CD14-positive monocyte (primary cell): ENCODE measurements at regions of chr15 and their contacts with region 1.

Region 1: DNA sequence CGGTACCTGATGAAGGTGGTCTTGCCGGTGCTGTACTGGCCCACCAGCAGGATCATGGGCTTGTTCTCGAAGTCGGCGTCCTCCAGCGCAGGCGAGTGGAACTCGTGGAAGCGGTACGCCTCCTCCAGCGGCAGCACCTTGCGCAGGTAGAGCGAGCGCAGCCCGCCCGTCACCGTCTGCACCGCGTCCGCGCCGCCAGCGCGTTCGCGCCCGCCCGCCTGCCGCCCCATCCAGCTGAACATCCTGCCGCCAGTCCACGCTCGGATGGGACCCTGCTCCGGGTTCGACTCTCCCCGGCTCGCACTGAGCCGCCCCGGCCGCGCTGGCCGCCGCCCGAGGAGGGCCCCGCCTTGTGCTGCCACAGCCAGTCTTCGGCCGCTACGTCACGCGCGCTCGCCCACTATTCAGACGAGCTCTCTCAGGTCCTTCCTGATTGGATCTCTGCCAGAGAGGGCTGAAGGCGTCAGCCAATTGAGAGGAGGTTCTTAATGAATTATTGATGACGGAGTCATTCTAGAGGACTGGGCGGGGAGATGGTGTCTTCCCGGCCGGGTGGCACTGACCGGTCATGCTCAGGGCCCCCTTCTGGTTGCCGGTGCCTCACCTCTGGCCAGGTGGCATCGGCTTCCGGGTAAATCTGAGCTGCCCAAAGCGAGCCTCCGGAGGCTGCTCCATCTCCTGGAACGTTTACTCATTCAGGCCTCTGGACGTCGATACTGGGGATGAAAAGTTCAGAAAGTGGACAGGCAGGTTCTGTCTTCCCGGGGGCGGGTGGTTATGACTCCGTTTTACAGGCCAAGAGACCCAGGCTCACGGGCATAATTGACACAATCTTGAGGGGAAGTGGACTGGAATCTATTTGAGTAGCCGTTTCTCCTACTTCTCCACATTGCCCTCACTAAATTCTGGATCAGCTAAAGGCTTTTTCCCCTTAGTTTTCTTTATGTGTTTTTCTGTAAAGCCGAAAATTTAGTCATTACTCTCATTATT is at the start of gene EHD4:
- DNase-seq: peak; percentile 99 to 100 (median 99)
- H3K4me3 ChIP-seq: peak within 1 kb of the TSS; percentile 90 to 93 (median 92)
- H3K4me3 Mint-ChIP-seq: peak within 1 kb of the TSS; percentile 91 to 93
- H3K27ac ChIP-seq: peak within 1 kb of the TSS; percentile 58 to 93
- H3K27ac Mint-ChIP-seq: peak within 1 kb of the TSS; percentile 96 to 98 (median 97)
- H3K4me1 ChIP-seq: peaks cover 48 to 51% of the 10 kb centered on the region in 2 donors
- H3K4me1 Mint-ChIP-seq: peaks cover 54% of the 10 kb centered on the region
- H3K27me3 ChIP-seq: no peaks in the 10 kb centered on the region
- H3K27me3 Mint-ChIP-seq: peaks cover 0 to 2% (median 1%) of the 10 kb centered on the region in 3 donors
- CTCF ChIP-seq: peak; percentile 51
- polyA plus RNA-seq, gene EHD4: 12.8 to 16.0 (median 14.2) TPM

Region 2: DNA sequence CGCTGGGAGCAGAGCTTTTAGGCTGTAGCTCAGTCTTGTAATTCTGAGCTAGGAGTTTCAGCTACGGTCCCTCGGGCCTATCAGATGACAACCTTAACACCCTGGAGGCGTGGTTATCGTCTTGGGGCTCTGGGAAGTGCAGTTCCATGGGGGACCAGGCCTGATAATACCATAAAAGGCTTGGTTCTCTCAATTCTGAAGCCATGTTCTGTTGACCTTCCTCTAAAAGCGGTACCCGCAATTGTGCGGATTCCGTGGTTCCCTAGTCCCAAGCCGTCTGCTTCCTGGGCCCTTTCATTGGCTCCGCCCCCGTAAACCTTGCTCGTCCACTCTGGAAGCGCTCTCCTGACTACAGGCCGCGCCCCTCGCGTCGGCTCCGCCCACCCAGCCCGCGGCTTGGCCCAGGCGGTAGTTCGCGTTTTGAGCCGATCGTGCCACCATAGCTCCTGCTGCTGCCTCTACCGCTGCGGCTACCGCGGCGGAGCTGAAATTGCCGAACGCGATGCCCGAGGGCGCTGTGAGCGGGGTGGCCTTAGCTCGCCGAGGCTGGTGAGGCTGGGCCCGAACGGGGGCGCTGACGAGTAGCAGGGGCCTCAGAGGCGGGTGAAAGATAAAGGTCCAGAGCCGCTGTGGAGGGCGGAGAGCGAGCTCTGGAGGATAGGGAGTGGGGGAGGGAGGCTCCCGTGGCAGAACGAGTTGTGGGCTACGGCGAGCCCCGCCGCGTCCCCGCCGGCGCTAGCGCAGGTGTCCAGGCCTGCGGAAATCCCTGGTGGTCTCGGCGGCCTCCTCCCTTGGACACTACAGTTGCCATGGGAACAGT is 198.3 kb before region 1 on chr15 and contains the start of gene MAPKBP1:
- intact Hi-C with region 1: loop called in 1 of 2 experiments (anchors 5 kb)
- DNase-seq: peak; percentile 98 to 100 (median 98)
- H3K4me3 ChIP-seq: peak within 1 kb of the TSS; percentile 72 to 89 (median 83)
- H3K4me3 Mint-ChIP-seq: peak within 1 kb of the TSS; percentile 83 to 91
- H3K27ac ChIP-seq: peak within 1 kb of the TSS; percentile 76 to 81
- H3K27ac Mint-ChIP-seq: peak within 1 kb of the TSS; percentile 81 to 96 (median 91)
- H3K4me1 ChIP-seq: peaks cover 28 to 32% of the 10 kb centered on the region in 2 donors
- H3K4me1 Mint-ChIP-seq: peaks cover 36% of the 10 kb centered on the region
- H3K27me3 ChIP-seq: no peaks in the 10 kb centered on the region
- H3K27me3 Mint-ChIP-seq: no peaks in the 10 kb centered on the region
- CTCF ChIP-seq: peak; percentile 57
- polyA plus RNA-seq, gene MAPKBP1: 0.76 to 8.6 (median 1.1) TPM

Region 3: DNA sequence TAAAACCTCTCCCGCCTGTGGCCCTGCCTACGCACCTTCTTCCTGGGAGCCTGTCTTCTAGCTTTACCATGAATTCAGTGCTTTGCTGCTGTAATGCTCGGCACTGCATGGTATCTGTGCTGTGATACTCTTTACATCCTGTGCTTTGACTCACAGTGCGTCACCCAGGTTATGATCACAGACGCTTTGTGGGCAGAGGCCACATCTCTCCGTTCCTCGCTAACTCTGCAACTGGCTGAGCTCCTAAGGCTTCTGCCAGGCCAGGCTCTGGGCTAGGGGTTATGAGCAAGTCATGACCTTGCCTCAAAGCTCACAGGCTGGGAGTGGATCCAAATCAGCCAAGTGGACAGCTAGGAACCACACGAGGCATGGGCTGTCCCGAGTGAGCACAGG is 101.9 kb before region 1 on chr15:
- intact Hi-C with region 1: no loop called
- DNase-seq: no peak
- H3K4me3 ChIP-seq: no peak overlapping the region
- H3K4me3 Mint-ChIP-seq: no peak overlapping the region
- H3K27ac ChIP-seq: no peak overlapping the region
- H3K27ac Mint-ChIP-seq: no peak overlapping the region
- H3K4me1 ChIP-seq: no peaks in the 10 kb centered on the region
- H3K4me1 Mint-ChIP-seq: no peaks in the 10 kb centered on the region
- H3K27me3 ChIP-seq: no peaks in the 10 kb centered on the region
- H3K27me3 Mint-ChIP-seq: peaks cover 6 to 9% (median 7%) of the 10 kb centered on the region in 3 donors
- CTCF ChIP-seq: no peak

Region 4: GRCh38 chr15:41930221-41930866 is 42.2 kb before region 1 on chr15:
- intact Hi-C with region 1: loop called (anchors 2 to 5 kb)
- DNase-seq: peak; percentile 91 to 96 (median 93)
- H3K4me3 ChIP-seq: peak overlapping the region in 1 of 3 experiments; percentile 38
- H3K4me3 Mint-ChIP-seq: peak overlapping the region; percentile 39 to 64
- H3K27ac ChIP-seq: peak overlapping the region; percentile 58 to 79
- H3K27ac Mint-ChIP-seq: peak overlapping the region; percentile 87 to 96 (median 94)
- H3K4me1 ChIP-seq: peaks cover 72 to 88% of the 10 kb centered on the region in 2 donors
- H3K4me1 Mint-ChIP-seq: peaks cover 80% of the 10 kb centered on the region
- H3K27me3 ChIP-seq: no peaks in the 10 kb centered on the region
- H3K27me3 Mint-ChIP-seq: no peaks in the 10 kb centered on the region
- CTCF ChIP-seq: peak; percentile 51

Region 5: GRCh38 chr15:41936649-41937567 is 35.6 kb before region 1 on chr15:
- intact Hi-C with region 1: loop called (anchors 2 to 5 kb)
- DNase-seq: peak; percentile 81 to 95 (median 84)
- H3K4me3 ChIP-seq: peak overlapping the region in 1 of 3 experiments; percentile 10
- H3K4me3 Mint-ChIP-seq: peak overlapping the region; percentile 28 to 39
- H3K27ac ChIP-seq: peak overlapping the region; percentile 65 to 82
- H3K27ac Mint-ChIP-seq: peak overlapping the region; percentile 90 to 98 (median 94)
- H3K4me1 ChIP-seq: peaks cover 33 to 52% of the 10 kb centered on the region in 2 donors
- H3K4me1 Mint-ChIP-seq: peaks cover 53% of the 10 kb centered on the region
- H3K27me3 ChIP-seq: no peaks in the 10 kb centered on the region
- H3K27me3 Mint-ChIP-seq: peaks cover 0 to 5% (median 0%) of the 10 kb centered on the region in 3 donors
- CTCF ChIP-seq: no peak